Activated CD4-positive, alpha-beta T cell treated with anti-CD3 and anti-CD28 coated beads for 36 hours (primary cell): ENCODE measurements at regions of chr18 and their contacts with region 1.

Region 1: GRCh38 chr18:6249170-6249569 is 165.5 kb downstream of the L3MBTL4 start:
- DNase-seq: no peak
- ATAC-seq: no peak
- H3K4me3 Mint-ChIP-seq: no peak overlapping the region
- H3K27ac Mint-ChIP-seq: no peak overlapping the region
- H3K4me1 Mint-ChIP-seq: no peaks in the 10 kb centered on the region
- H3K27me3 Mint-ChIP-seq: no peaks in the 10 kb centered on the region

Region 2: DNA sequence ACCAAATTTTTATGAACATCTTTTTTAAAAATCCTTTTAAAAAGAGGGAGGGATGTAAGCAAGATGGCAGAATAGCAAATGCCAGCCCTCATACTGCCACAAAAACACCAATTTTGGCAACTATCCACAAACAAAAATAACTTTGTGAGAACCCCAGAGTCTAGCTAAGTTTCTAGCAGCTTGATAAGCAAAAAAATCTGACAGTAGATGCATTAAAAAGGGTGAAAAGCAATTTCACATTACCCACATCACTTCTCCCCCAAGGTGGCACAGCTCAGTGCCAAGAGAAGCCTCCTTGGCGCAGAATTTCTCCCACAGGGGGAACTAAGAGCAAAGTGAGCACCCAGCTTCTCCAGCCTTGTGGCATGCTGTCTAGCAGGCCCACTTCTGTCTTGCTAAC is 91.0 kb after region 1 on chr18:
- CTCF ChIA-PET with region 1: no interaction called
- POLR2A ChIA-PET with region 1: no interaction called
- intact Hi-C with region 1: loop called in 1 of 2 experiments (anchors 10 kb)
- DNase-seq: no peak
- ATAC-seq: no peak
- H3K4me3 Mint-ChIP-seq: no peak overlapping the region
- H3K27ac Mint-ChIP-seq: no peak overlapping the region
- H3K4me1 Mint-ChIP-seq: no peaks in the 10 kb centered on the region
- H3K27me3 Mint-ChIP-seq: no peaks in the 10 kb centered on the region

Region 3: DNA sequence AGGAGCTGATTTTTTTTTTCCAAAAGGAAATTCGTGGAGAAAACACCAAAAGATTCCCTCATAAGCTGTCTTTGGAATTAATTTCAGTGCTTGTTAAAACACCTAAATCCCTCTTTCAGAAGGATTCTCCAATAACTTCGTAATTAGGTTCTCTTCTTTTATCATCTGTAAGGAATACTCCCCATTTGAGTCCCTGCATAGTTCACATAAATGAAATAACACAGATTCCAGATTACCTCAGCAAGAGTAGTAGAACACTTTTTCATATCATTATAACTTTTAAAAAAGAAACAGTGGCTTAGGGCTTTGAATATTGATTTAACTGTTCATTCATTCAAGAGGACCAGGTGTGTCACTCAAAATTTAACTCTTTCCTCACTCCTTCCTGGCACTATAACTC is 535.8 kb after region 1 on chr18:
- CTCF ChIA-PET with region 1: no interaction called
- POLR2A ChIA-PET with region 1: no interaction called
- intact Hi-C with region 1: no loop called
- DNase-seq: no peak
- ATAC-seq: no peak
- H3K4me3 Mint-ChIP-seq: no peak overlapping the region
- H3K27ac Mint-ChIP-seq: no peak overlapping the region
- H3K4me1 Mint-ChIP-seq: no peaks in the 10 kb centered on the region
- H3K27me3 Mint-ChIP-seq: no peaks in the 10 kb centered on the region

Region 4: DNA sequence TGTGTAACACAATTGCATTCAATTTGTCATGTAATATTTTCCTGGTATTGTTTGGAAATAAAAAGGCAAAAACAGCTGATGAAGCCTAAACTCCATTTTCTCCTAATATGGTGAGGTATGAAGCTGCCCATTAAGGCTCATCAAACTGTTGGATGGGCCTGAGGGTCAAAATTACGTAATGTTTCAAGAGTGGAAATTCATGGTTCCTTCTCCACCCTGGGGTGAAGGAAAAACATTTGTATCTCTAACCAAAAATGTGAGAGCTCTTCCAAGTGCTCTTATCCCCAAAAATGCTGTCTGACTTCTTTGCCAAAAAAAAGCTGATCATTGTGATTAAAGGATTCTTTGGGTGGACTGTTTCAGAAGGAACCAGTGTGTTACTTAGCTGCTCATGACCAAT is 572.2 kb after region 1 on chr18:
- CTCF ChIA-PET with region 1: no interaction called
- POLR2A ChIA-PET with region 1: no interaction called
- intact Hi-C with region 1: no loop called
- DNase-seq: no peak
- ATAC-seq: no peak
- H3K4me3 Mint-ChIP-seq: no peak overlapping the region
- H3K27ac Mint-ChIP-seq: no peak overlapping the region
- H3K4me1 Mint-ChIP-seq: no peaks in the 10 kb centered on the region
- H3K27me3 Mint-ChIP-seq: no peaks in the 10 kb centered on the region